ENCODE measurements at regions of chr6 and their contacts with region 1.

Region 1: DNA sequence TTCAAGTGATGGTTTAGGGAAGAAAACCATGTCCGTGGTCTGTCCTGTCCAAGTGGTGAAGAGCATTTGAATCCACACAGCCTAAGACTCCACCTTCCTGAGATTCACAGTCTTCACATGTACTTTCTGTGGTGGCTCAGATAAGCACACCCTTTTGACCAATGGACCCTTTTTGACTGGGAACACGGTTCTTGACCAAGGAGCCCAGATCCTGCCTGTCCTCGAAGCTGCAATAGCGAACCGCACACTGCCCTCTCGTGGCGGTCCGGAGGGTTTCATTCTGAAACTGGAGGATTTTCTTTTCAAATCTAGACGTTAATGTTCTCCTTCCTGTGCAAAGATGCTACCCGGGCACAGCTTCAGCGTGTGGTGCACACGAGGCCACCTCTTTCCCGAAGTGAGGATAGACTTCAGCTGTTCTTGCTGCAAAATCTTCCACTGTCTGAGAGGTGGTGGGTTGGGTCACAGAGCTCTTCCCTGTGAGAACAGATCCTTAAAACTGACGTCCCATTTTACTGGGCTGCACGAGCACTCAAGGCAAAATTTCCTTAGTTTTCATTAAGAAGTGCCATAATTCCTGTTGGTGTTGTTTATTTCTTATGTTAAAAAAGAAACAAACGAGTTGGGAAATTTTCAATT is 90.5 kb downstream of the SYNJ2 start:
- DNase-seq: peak; percentile 46
- H3K4me3 ChIP-seq: no peak overlapping the region
- H3K27ac ChIP-seq: no peak overlapping the region
- H3K4me1 ChIP-seq: peaks cover 26% of the 10 kb centered on the region
- H3K27me3 ChIP-seq: no peaks in the 10 kb centered on the region
- CTCF ChIP-seq: peak; percentile 74 to 87

Region 2: GRCh38 chr6:157644043-157644810 is 428.0 kb before region 1 on chr6:
- CTCF ChIA-PET with region 1: no interaction called
- dilution Hi-C with region 1: no loop called
- in situ Hi-C with region 1: no loop called
- intact Hi-C with region 1: loop called (anchors 1 kb)
- DNase-seq: peak; percentile 39
- H3K4me3 ChIP-seq: no peak overlapping the region
- H3K27ac ChIP-seq: no peak overlapping the region
- H3K4me1 ChIP-seq: peaks cover 13% of the 10 kb centered on the region
- H3K27me3 ChIP-seq: no peaks in the 10 kb centered on the region
- CTCF ChIP-seq: peak; percentile 51 to 59

Region 3: GRCh38 chr6:157764178-157765033 is 307.8 kb before region 1 on chr6:
- CTCF ChIA-PET with region 1: no interaction called
- dilution Hi-C with region 1: no loop called
- in situ Hi-C with region 1: no loop called
- intact Hi-C with region 1: loop called (anchors 1 kb)
- DNase-seq: peak; percentile 100
- H3K4me3 ChIP-seq: no peak overlapping the region
- H3K27ac ChIP-seq: peak overlapping the region; percentile 98
- H3K4me1 ChIP-seq: peaks cover 53% of the 10 kb centered on the region
- H3K27me3 ChIP-seq: no peaks in the 10 kb centered on the region
- CTCF ChIP-seq: no peak

Region 4: DNA sequence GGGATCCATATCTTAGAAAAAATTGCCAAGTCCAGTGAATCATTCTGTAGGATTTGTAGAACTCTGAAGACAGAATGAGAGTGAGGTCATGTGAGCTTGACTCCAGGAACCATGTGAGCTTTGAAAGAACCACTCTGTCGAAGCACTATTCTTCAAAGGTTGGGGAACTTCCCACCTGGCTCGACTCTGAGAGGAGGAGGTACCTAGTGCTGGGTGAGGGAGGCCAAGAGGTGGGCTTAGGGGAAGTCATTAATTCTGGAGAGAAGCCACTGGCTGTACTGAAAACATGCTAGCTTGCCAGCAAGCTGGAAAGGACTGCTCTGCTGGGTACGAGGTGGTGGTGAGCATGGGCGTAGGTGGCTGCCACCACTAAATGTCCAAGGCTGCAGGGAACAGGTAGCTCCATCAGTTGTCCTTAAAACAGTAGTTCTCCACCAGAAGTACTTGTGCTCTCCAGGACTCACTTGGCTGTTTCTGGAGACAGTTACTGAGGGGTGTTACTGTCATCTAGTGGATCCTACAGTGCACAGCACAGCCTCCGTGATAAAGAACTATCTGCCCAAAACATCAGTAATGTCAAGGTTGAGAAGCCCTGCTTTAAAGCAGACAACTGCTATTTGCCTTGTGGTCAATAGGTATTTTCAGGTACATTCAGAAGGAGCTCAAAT is 125.2 kb before region 1 on chr6:
- CTCF ChIA-PET with region 1: no interaction called
- dilution Hi-C with region 1: no loop called
- in situ Hi-C with region 1: no loop called
- intact Hi-C with region 1: loop called (anchors 5 kb)
- DNase-seq: no peak
- H3K4me3 ChIP-seq: no peak overlapping the region
- H3K27ac ChIP-seq: no peak overlapping the region
- H3K4me1 ChIP-seq: no peaks in the 10 kb centered on the region
- H3K27me3 ChIP-seq: no peaks in the 10 kb centered on the region
- CTCF ChIP-seq: peak in 1 of 2 donors; percentile 33

Region 5: GRCh38 chr6:157974341-157974894 is 97.8 kb before region 1 on chr6:
- CTCF ChIA-PET with region 1: no interaction called
- dilution Hi-C with region 1: no loop called
- in situ Hi-C with region 1: no loop called
- intact Hi-C with region 1: no loop called
- DNase-seq: no peak
- H3K4me3 ChIP-seq: no peak overlapping the region
- H3K27ac ChIP-seq: no peak overlapping the region
- H3K4me1 ChIP-seq: peaks cover under 1% of the 10 kb centered on the region
- H3K27me3 ChIP-seq: no peaks in the 10 kb centered on the region
- CTCF ChIP-seq: no peak

Region 6: DNA sequence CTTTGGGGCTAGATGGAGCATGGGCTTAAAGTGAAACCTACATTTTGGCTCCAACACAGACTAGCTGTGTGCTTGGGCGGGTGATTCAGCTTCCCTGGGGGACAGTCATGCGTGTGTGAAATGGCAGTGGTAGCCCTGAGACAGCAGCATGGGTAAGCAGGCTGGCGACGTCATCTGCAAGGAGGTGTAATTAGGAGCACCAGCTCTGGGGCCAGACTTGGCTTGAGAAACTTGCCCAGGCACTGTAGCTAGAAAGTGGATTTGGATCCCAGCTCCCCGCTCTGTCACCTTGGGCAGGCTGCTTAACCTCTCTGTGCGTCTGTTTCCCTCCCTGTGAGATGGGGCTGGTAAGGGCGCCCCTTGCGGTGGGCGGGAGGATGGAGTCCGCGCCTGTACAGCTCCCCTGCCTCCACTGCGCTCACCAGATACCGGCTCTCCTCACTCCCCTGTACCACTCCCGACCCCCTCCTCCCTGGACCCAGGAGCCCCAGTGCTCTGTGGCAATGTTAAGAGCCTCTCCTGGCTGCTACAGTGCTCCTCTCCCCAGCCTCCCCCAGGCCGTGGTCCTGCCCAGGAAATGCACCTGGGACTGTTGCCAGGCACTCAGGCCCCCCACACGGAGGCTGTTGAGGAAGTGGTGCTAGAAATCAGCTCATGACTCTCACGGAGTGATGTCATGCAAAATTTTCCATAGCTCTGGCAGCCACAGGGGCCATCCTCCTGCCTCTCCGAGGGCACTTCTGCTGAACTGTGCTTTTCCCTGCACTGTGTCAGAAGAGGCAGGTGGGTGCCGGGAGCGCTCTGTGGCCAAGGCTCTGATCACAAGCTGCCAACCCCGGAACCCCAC is 45.9 kb before region 1 on chr6:
- CTCF ChIA-PET with region 1: interaction called, 6 read pairs
- dilution Hi-C with region 1: no loop called
- in situ Hi-C with region 1: no loop called
- intact Hi-C with region 1: loop called (anchors 2 kb)
- DNase-seq: peak; percentile 75
- H3K4me3 ChIP-seq: no peak overlapping the region
- H3K27ac ChIP-seq: peak overlapping the region; percentile 61
- H3K4me1 ChIP-seq: peaks cover 22% of the 10 kb centered on the region
- H3K27me3 ChIP-seq: no peaks in the 10 kb centered on the region
- CTCF ChIP-seq: peak; percentile 36 to 49

Region 7: DNA sequence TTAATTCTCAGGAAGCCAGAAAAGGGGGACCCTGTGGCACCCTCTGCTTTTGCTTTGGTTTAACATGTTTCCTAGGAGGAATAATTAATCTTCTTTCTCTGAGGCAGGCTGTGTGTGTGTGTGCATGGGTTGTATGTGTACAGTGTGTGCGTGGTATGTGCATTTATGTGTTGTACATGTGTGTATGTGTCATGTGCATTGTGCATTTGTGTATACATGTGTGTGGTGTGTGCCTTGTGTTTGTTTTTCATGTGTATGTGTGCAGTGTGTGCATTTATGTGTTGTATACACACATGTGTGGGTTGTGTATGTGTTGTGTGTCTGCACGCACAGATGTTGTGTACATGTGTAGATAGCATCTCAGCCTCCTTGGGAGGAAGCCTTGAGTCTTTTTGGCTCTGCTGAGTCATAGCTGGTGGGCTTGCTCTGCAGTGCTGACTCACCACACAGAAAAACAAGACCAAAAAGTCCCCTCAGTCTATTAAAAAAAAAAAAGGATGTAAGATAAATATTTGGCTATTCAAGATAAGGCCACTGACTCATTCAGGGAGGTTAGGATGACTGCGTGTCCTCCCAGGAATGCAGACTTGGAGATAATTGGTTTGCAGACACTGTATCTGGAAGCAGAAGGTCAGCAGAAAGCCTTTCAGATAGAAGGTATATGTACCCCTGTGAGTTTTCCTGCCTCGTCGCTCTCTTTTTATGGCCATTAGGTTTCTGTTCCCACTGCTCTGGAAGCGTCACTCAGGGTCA is 32.0 kb before region 1 on chr6:
- CTCF ChIA-PET with region 1: no interaction called
- dilution Hi-C with region 1: no loop called
- in situ Hi-C with region 1: no loop called
- intact Hi-C with region 1: loop called (anchors 2 kb)
- DNase-seq: peak; percentile 91
- H3K4me3 ChIP-seq: no peak overlapping the region
- H3K27ac ChIP-seq: no peak overlapping the region
- H3K4me1 ChIP-seq: peaks cover 48% of the 10 kb centered on the region
- H3K27me3 ChIP-seq: no peaks in the 10 kb centered on the region
- CTCF ChIP-seq: no peak

Region 8: GRCh38 chr6:158769771-158770432 is 697.7 kb after region 1 on chr6:
- CTCF ChIA-PET with region 1: no interaction called
- dilution Hi-C with region 1: no loop called
- in situ Hi-C with region 1: no loop called
- intact Hi-C with region 1: no loop called
- DNase-seq: no peak
- H3K4me3 ChIP-seq: no peak overlapping the region
- H3K27ac ChIP-seq: no peak overlapping the region
- H3K4me1 ChIP-seq: peaks cover 15% of the 10 kb centered on the region
- H3K27me3 ChIP-seq: no peaks in the 10 kb centered on the region
- CTCF ChIP-seq: no peak